ENCODE measurements at regions of chr19 and their contacts with region 1.

Region 1: DNA sequence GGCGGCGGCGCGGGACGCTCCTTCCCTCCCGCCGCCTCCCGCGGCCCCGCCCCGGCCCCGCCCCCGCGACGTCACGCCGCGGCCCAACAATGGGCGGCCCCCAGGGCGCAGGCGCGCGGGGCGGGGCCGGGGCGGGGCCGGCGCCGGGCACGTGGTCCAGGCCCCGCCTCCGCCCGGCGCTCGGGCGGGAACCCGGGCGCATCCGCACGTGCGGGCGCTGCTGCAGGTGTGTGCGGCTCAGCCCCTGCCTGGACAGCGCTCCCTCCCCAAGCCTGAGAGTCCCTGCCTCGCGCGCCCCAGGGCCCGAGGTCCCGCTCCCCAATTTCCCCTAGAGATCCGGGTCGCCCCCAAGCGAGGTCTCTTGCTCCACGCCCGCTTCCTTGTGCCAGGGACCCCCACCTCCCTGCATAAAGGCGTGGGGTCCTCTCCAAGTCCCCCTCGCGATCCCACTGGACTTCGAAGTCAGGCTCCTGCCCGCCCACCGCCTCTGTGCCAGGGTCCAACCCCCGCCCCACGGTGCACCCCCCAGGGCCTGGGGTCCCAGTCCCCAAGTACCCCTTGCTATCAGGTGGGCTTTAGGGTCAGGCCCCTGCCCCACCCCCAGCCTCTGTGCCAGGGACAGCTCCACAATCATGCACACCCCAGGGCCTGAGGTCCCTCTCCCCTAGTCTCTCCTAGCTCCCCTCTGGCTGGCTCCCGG is at the start of gene MEX3D:
- DNase-seq: peak in 1 of 2 donors; percentile 85
- H3K4me3 ChIP-seq: peak within 1 kb of the TSS; percentile 57 to 94
- H3K27ac ChIP-seq: peak within 1 kb of the TSS; percentile 72 to 84
- H3K4me1 ChIP-seq: peaks cover 4 to 9% of the 10 kb centered on the region in 2 donors
- H3K27me3 ChIP-seq: no peaks in the 10 kb centered on the region
- CTCF ChIP-seq: no peak
- total RNA-seq, gene MEX3D: 83.7 TPM

Region 2: DNA sequence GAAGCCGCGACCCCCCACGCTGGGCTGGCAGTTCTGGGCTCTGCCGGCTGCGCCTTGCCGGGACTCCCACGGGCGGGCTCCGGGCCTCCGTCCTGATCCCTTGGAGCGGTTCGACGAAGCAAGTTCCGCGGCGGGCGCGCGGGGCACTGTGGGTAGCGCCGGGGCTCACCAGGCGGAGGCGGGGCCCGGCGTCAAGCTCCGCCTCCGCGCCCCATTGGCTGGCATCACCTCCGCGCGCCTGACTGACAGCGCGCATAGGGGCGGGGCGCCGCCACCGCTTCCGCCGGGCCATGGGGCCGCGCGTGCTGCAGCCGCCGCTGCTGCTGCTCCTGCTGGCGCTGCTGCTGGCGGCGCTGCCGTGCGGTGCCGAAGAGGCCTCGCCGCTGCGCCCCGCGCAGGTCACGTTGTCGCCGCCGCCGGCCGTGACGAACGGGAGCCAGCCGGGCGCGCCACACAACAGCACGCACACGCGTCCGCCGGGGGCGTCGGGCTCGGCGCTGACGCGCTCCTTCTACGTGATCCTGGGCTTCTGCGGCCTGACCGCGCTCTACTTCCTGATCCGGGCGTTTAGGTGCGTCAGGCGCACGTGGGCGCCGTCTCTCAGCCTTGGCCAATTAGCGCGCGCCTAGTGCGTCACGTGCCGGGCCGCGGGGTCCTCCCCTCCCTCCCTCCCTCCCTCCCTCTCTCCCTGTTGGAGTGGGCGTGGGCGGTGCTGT is 293.1 kb before region 1 on chr19 and contains the start of gene FAM174C:
- intact Hi-C with region 1: no loop called
- DNase-seq: peak; percentile 75 to 96
- H3K4me3 ChIP-seq: peak within 1 kb of the TSS; percentile 79 to 86
- H3K27ac ChIP-seq: peak within 1 kb of the TSS; percentile 94 to 99
- H3K4me1 ChIP-seq: peaks cover 32 to 51% of the 10 kb centered on the region in 2 donors
- H3K27me3 ChIP-seq: no peaks in the 10 kb centered on the region
- CTCF ChIP-seq: no peak
- total RNA-seq, gene FAM174C: 156 TPM

Region 3: DNA sequence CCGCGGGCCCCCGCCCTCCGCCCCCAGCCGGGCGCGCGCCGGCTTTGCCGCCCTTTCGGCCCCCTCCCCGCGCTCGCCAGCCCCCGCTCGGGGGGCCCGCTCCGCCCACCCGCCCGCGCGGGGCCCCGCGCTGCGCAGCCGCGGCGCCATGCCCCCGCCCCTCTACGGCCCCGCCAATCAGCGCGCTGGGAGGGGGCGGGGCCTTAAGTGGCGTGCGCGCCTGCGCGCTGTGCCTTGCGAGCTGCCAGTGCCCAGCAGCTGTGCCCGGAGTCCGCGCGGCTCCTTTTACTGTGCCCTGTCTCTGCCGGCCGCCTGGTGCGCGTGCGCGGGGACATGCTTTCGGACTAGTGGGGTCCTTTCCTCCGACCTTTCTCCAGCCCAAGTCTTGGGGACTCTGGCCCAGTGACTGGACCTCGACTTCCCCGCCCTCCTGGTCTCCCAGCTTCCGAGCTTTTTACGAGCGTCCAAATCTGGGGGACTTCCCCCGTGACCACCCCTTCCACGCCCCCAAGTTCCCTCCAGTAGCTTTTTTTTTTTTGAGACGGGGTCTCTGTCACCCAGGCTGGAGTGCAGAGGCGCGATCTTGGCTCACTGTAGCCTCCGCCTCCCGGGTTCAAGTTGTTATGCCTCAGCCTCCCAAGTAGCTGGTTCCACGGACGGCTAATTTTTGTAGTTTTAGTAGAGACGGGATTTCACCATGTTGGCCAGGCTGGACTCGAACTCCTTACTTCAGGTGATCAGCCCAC is 24.5 kb after region 1 on chr19 and contains the start of gene MBD3:
- intact Hi-C with region 1: loop called (anchors 1 kb)
- DNase-seq: peak; percentile 62 to 96
- H3K4me3 ChIP-seq: peak within 1 kb of the TSS; percentile 74 to 89
- H3K27ac ChIP-seq: peak within 1 kb of the TSS; percentile 84 to 94
- H3K4me1 ChIP-seq: peaks cover 8 to 17% of the 10 kb centered on the region in 2 donors
- H3K27me3 ChIP-seq: no peaks in the 10 kb centered on the region
- CTCF ChIP-seq: peak in 1 of 3 experiments; percentile 27
- total RNA-seq, gene MBD3: 143 TPM

Measured in ascending aorta (tissue), 2 donors.